Panc1 (cell line): ENCODE measurements at regions of chr5 and their contacts with region 1.

Region 1: DNA sequence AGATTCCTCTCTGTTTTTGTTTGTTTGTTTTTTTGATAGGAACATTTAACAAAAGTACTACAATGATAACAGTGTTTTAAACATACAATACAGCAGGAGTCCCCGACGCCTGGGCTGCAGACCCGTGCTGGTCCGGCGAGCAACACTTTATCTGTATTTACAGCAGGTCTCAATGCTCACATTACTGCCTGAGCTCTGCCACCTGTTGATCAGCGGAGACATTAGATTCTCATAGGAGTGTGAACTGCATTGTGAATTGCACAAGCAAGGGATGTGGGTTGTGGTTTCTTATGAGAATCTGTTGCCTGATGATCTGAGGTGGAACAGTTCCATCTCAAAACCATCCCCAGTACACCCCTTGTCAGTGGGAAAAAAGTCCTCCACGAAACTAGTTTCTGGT is 1068.5 kb upstream of the CDH10 start:
- DNase-seq: no peak
- ATAC-seq: peak; percentile 72; the same call in 1 of the 2 replicates
- H3K4me3 ChIP-seq: no peak overlapping the region
- H3K27ac ChIP-seq: no peak overlapping the region
- H3K4me1 ChIP-seq: no peaks in the 10 kb centered on the region
- H3K27me3 ChIP-seq: no peaks in the 10 kb centered on the region; the same call in 1 of the 2 replicates
- CTCF ChIP-seq: peak; percentile 17; the same call in 1 of the 2 replicates

Region 2: DNA sequence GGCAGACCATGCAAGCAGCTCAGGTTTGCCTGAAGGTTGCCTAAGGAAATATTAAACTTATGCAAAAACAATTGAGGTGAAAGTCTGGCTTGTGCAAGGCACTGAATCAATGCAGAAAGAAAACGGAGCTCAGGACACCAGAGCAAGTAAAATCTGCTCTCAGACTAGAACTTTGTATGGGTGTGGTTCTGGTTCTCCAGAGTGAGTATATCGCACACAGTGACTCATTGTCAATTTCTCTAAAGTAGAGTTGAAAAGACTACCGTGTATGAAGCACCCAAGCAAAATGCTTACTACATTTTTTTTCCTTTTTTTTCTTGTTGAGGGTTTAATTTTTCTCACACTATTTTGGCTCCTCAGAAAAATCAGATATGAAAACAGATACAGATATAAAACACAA is 418.2 kb before region 1 on chr5:
- CTCF ChIA-PET with region 1: no interaction called
- POLR2A ChIA-PET with region 1: no interaction called
- in situ Hi-C with region 1: no loop called
- intact Hi-C with region 1: no loop called
- DNase-seq: no peak
- ATAC-seq: no peak
- H3K4me3 ChIP-seq: no peak overlapping the region
- H3K27ac ChIP-seq: no peak overlapping the region
- H3K4me1 ChIP-seq: no peaks in the 10 kb centered on the region
- H3K27me3 ChIP-seq: no peaks in the 10 kb centered on the region
- CTCF ChIP-seq: no peak

Region 3: GRCh38 chr5:25458628-25459027 is 254.6 kb before region 1 on chr5:
- CTCF ChIA-PET with region 1: no interaction called
- POLR2A ChIA-PET with region 1: no interaction called
- in situ Hi-C with region 1: no loop called
- intact Hi-C with region 1: no loop called
- DNase-seq: no peak
- ATAC-seq: no peak
- H3K4me3 ChIP-seq: no peak overlapping the region
- H3K27ac ChIP-seq: no peak overlapping the region
- H3K4me1 ChIP-seq: no peaks in the 10 kb centered on the region
- H3K27me3 ChIP-seq: no peaks in the 10 kb centered on the region
- CTCF ChIP-seq: no peak

Region 4: DNA sequence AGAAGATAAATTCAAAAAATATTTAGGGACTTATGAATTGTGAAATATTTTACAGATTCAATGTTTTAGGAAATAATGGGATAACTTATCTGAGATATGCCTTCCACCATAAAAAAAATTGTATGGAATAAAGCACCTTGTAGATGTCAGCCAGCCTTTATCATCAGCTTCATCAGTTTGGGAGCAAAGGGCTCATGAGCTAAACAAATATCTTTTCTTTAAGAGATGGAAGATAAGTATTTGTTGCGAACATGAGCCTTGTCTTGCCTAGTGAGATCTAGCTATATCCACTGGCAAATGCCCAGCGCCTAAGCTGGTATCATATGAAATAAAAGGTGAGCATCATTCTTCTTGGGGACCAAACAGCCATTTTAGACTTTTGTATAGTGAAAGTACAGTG is 107.9 kb after region 1 on chr5:
- CTCF ChIA-PET with region 1: no interaction called
- POLR2A ChIA-PET with region 1: interaction called, 16 read pairs
- in situ Hi-C with region 1: no loop called
- intact Hi-C with region 1: no loop called
- DNase-seq: no peak
- ATAC-seq: no peak
- H3K4me3 ChIP-seq: no peak overlapping the region
- H3K27ac ChIP-seq: no peak overlapping the region
- H3K4me1 ChIP-seq: no peaks in the 10 kb centered on the region
- H3K27me3 ChIP-seq: no peaks in the 10 kb centered on the region
- CTCF ChIP-seq: no peak